Mammary epithelial cell (primary cell): ENCODE measurements at regions of chr20 and their contacts with region 1.

Region 1: DNA sequence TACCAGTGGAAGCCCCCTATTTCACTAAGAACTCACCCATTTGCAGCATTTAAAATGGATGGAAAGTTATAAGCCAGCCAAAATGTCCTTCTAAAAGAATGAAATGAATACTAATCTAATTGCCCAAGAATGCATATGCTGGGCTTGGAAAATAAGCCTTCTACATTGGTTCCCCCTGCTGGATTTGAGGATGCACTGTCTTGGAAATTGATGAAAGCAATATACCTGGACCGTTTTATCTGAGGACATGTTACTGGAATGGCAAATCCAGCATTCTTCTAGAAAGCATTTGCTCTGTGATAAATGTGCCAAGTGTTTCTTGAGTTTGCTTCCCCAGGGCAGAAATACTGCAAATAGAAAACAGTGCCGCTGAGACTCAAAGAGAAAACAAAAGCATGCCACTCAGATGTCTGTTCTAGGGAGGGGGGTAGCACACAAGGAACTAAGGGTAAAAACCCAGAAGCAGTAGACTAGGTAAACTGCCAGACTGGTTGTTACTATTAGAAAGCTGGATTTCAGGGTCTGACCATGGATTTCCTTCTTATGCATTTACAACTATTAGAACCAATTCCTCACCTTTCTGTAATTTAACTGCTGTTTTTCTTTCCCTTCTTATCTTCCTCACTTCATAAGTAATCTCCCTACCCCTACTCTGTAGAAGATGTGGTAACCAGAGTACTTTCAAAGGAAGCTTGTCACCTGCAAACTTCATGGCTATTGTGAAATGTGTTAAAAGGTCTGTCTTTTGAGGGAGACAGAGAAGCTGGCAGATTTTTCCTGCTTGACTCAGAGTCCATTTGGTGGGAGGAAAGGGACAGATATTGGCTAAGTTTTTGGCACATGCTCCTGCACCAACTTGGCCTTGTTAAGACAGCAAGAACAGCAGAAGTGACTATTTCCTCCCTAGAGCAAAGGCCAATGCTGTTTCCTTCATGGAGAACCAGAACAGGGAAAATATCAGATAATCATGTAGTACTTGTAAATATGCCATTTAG is 642.6 kb downstream of the KIF16B start:
- DNase-seq: peak; percentile 61
- H3K4me3 ChIP-seq: no peak overlapping the region
- H3K27ac ChIP-seq: no peak overlapping the region
- H3K4me1 ChIP-seq: peaks cover 12% of the 10 kb centered on the region
- H3K27me3 ChIP-seq: no peaks in the 10 kb centered on the region
- CTCF ChIP-seq: peak; percentile 78 to 81

Region 2: GRCh38 chr20:14142171-14142570 is 1788.4 kb before region 1 on chr20:
- CTCF ChIA-PET with region 1: no interaction called
- dilution Hi-C with region 1: no loop called
- in situ Hi-C with region 1: no loop called
- intact Hi-C with region 1: loop called (anchors 1 kb)
- DNase-seq: peak; percentile 66
- H3K4me3 ChIP-seq: no peak overlapping the region
- H3K27ac ChIP-seq: no peak overlapping the region
- H3K4me1 ChIP-seq: peaks cover 6% of the 10 kb centered on the region
- H3K27me3 ChIP-seq: no peaks in the 10 kb centered on the region
- CTCF ChIP-seq: peak; percentile 70 to 78

Region 3: DNA sequence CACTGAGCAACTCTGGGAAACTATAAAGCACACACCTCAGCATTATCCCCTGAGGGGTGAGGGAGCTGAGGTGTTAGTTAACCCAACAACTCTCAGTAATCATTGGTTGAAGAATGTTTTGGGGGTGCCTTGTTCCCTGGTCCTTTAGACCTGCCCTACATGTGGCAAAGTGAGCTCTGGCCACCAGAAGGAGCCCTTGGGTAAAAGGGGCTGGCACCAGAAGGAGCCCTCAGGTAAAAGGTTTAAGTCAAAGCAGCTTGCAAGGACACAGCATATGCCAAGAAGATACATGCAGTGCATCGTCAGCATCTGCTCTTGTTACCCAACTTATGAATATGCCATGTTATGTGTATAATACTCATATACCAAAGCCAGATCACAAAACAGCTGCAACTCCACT is 439.0 kb before region 1 on chr20:
- CTCF ChIA-PET with region 1: no interaction called
- dilution Hi-C with region 1: no loop called
- in situ Hi-C with region 1: no loop called
- intact Hi-C with region 1: loop called (anchors 2 kb)
- DNase-seq: peak; percentile 23
- H3K4me3 ChIP-seq: no peak overlapping the region
- H3K27ac ChIP-seq: no peak overlapping the region
- H3K4me1 ChIP-seq: peaks cover 6% of the 10 kb centered on the region
- H3K27me3 ChIP-seq: no peaks in the 10 kb centered on the region
- CTCF ChIP-seq: peak; percentile 43 to 71

Region 4: DNA sequence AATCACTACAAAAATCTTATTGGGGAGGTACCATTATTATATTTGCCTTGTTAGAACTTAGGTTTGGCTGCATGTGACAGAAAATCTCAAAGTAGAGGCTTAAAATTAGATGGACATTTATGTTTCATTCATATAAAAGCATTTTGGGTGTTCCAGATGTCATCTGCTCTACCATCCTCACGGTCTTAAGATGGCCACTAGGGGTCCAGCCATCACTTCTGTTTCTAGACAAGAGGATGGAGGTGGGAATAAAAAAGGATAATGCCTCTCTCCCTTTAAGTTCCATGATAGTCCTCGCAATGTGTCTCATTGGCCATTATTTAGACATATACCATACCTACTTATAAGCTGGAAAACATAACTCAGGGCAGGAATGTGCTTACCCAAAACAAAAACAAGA is 286.9 kb before region 1 on chr20:
- CTCF ChIA-PET with region 1: no interaction called
- dilution Hi-C with region 1: no loop called
- in situ Hi-C with region 1: no loop called
- intact Hi-C with region 1: loop called (anchors 2 kb)
- DNase-seq: no peak
- H3K4me3 ChIP-seq: no peak overlapping the region
- H3K27ac ChIP-seq: no peak overlapping the region
- H3K4me1 ChIP-seq: no peaks in the 10 kb centered on the region
- H3K27me3 ChIP-seq: no peaks in the 10 kb centered on the region
- CTCF ChIP-seq: peak; percentile 49 to 63

Region 5: GRCh38 chr20:15703171-15703911 is 227.3 kb before region 1 on chr20:
- CTCF ChIA-PET with region 1: interaction called, 4 read pairs
- dilution Hi-C with region 1: no loop called
- in situ Hi-C with region 1: no loop called
- intact Hi-C with region 1: loop called (anchors 5 kb)
- DNase-seq: peak; percentile 96
- H3K4me3 ChIP-seq: no peak overlapping the region
- H3K27ac ChIP-seq: peak overlapping the region; percentile 51
- H3K4me1 ChIP-seq: peaks cover 44% of the 10 kb centered on the region
- H3K27me3 ChIP-seq: no peaks in the 10 kb centered on the region
- CTCF ChIP-seq: no peak

Region 6: GRCh38 chr20:16476032-16476431 is 545.4 kb after region 1 on chr20:
- CTCF ChIA-PET with region 1: no interaction called
- dilution Hi-C with region 1: no loop called
- in situ Hi-C with region 1: no loop called
- intact Hi-C with region 1: loop called (anchors 10 kb)
- DNase-seq: peak; percentile 23
- H3K4me3 ChIP-seq: no peak overlapping the region
- H3K27ac ChIP-seq: no peak overlapping the region
- H3K4me1 ChIP-seq: no peaks in the 10 kb centered on the region
- H3K27me3 ChIP-seq: no peaks in the 10 kb centered on the region
- CTCF ChIP-seq: peak; percentile 65

Region 7: DNA sequence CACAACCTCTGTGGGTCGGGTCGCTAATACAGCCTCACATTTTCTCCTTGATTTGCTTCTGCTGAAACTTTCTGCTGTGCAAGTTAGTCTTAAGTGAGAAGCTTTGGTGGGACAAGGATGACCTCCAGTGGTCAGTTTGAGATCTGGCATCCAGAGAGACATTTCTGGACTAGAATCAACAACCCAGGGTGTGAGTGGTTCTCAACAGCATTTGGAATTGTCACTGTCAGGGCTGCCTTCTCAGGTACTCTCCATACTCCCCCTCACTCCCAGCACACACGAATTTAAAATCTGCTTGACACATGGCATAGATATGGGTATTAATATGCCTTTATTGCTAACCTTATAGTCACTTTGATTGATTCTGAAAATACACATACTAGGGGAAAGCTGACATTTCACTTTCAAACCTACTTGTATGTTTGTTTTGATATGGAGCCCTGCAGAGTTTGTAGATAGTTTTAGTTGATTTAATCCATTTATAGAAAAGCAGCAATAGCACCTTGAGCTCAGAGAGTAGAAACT is 830.8 kb after region 1 on chr20:
- CTCF ChIA-PET with region 1: no interaction called
- dilution Hi-C with region 1: no loop called
- in situ Hi-C with region 1: no loop called
- intact Hi-C with region 1: loop called (anchors 5 kb)
- DNase-seq: peak; percentile 47
- H3K4me3 ChIP-seq: no peak overlapping the region
- H3K27ac ChIP-seq: no peak overlapping the region
- H3K4me1 ChIP-seq: peaks cover 3% of the 10 kb centered on the region
- H3K27me3 ChIP-seq: no peaks in the 10 kb centered on the region
- CTCF ChIP-seq: peak; percentile 60 to 76